Activated CD4-positive, alpha-beta T cell treated with anti-CD3 and anti-CD28 coated beads, Interleukin-2, amount 10 ng/mL, durations not matched to agents 24 days and 14 days (primary cell): ENCODE measurements at regions of chr2 and their contacts with region 1.

Region 1: DNA sequence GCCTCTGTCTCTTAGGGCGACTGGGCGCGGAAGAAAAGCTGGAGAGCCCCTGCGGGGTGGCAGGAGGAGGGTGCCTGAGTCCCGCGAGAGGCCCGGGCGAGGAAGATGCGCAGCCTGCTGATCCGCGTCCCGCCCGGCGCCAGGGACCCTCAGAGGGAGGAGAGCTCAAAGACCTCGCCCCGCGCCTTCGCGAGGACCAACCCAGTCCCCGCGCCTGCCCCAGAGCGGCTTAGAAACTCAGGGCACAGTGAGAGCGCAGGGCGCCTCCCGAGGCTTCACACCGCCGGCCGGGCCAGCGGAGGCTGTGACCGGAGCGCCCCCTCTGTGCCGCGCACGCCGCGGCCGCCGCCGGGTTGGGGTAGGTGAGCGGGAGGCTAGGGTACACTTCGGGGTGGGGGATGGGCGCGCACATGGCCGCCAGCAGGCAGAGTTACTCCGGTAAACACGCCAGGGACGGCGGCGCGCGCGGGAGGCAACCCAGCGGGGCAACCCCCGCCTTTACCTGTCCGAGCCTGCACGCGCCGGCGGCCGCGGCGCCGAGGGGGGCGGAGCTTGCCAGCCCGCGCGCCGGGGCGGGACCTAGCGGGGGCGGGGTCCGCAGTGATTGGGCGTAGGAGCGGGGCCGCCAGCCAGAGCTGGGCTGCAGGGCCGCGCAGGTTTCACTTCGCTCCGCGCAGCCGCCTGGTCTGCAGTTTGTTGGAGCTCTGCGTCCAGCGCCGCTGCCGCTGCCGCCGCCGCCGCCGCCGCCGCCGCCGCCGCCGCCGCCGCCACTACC is at the start of gene BCL2L11:
- DNase-seq: peak; percentile 98
- H3K4me3 Mint-ChIP-seq: peak within 1 kb of the TSS; percentile 96
- H3K27ac Mint-ChIP-seq: peak within 1 kb of the TSS; percentile 93
- H3K4me1 Mint-ChIP-seq: peaks cover 44% of the 10 kb centered on the region
- H3K27me3 Mint-ChIP-seq: peaks cover 20% of the 10 kb centered on the region
- total RNA-seq, gene BCL2L11: 193 and 219 TPM in 2 replicates

Region 2: DNA sequence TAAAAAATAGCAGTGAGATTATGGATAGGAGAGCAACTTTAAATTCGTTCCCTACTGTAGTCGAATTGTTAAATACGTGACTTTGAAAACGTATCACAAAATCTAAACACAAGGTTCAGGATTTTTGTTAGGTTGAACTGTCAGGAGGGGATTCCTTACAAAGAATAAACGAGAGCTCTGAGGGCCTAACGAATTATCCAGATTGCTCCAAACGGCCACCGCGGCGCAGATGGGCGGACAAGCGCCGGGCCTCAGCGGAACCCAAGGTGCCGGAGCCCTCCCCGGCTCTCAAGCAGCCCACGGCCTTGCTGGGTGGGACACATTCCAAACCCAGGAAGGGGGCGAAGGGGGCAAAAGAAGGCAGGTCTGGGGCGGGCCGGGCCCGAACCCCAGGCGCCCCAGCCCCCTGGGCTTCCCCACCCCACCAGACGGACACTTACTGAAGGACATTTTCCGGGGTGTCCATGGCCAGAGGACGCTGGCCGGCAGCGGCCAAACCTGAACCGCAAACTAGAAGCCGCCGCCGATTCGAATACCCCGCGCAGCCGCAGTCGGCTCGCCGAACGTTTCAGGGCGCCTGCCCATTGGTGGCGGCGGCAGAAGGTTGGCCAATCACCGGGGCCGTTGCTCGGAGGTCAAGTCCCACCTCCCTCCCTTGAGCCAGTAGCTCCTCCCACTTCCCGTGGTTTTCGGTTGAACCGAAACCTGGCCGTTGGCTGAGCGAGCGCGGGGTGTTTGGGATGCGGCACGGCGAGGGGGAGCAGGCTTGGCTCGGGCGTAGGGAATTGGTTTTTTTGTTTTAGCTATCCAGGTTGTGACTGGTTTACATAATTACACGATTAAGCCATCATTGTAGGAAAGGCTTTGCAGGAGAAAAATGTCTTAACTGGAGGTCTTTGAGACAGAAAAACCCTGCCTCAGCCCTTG is 442.6 kb before region 1 on chr2 and contains the start of gene BUB1:
- intact Hi-C with region 1: loop called (anchors 10 kb)
- DNase-seq: peak; percentile 99
- H3K4me3 Mint-ChIP-seq: peak within 1 kb of the TSS; percentile 98
- H3K27ac Mint-ChIP-seq: peak within 1 kb of the TSS; percentile 99
- H3K4me1 Mint-ChIP-seq: peaks cover 33% of the 10 kb centered on the region
- H3K27me3 Mint-ChIP-seq: peaks cover 9% of the 10 kb centered on the region
- total RNA-seq, gene BUB1: 58.4 and 61.7 TPM in 2 replicates

Region 3: DNA sequence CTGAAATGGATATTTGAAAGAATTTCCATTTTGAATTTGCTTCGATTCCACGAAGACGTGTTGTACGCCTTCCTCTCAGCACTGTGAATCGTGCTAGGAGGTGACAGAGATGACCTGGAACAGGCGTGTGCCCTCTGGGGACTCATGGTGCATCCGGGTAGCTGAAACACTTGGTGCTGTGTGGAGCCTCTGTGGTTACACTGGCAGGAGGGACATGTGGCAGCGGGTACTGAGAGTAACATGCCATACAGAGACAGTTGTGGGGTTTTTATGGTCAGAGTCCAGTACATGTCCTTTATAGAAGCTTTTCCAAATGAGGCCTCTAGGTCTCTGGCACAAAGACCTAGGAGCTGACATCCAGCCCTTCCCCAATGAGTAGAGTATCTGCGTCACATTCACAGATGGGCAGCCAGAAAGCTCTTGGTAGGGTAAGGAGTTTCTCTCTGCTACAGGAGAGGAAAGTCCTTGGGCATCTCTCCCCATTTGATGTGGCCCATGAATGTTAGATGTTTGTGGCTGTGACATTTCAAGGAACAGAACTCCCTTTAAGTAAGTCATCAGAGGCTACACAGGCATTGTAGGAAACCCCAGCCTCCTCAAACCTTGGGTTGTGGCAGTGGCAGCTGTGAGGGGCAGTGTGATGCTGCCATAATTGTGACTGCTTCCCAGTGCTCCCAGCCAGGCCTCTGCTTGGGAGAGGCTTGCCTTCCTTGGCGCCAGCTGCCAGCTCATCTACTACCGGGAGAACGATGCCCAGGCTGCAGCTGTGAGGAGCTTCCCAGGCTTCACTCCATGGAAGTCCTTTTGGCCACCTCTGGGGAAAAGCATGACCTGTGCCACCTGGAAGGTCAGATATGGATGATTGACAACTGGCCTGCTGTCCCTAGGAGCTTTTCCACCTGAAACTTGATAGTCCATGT is 307.5 kb before region 1 on chr2:
- intact Hi-C with region 1: loop called (anchors 2 kb)
- DNase-seq: peak; percentile 53
- H3K4me3 Mint-ChIP-seq: no peak overlapping the region
- H3K27ac Mint-ChIP-seq: no peak overlapping the region
- H3K4me1 Mint-ChIP-seq: peaks cover 19% of the 10 kb centered on the region
- H3K27me3 Mint-ChIP-seq: peaks cover 31% of the 10 kb centered on the region

Region 4: DNA sequence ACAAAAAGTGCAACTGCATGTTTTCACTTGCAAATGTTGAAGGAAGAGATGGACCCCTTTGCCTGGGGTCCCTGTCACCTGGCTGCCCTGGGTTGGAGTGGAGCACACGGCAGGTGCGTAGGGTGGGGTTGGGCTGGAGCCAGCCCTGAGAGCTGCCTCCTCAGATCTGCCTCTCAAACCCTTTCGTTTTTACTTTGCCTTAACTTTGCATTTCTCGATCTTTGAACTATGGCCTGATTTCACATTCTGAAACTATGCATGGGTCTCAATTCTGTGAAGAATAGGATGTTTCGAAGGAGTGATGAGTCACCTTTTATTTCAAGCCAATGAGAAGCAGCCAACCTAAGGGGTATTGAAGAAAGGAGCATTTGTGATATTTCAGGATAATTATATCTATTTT is 255.3 kb before region 1 on chr2:
- intact Hi-C with region 1: loop called (anchors 1 kb)
- DNase-seq: peak; percentile 82
- H3K4me3 Mint-ChIP-seq: peak overlapping the region; percentile 47
- H3K27ac Mint-ChIP-seq: peak overlapping the region; percentile 43
- H3K4me1 Mint-ChIP-seq: peaks cover 66% of the 10 kb centered on the region
- H3K27me3 Mint-ChIP-seq: peaks cover 32% of the 10 kb centered on the region

Region 5: GRCh38 chr2:111091811-111092211 is 28.6 kb before region 1 on chr2:
- intact Hi-C with region 1: loop called (anchors 1 kb)
- DNase-seq: peak; percentile 53
- H3K4me3 Mint-ChIP-seq: no peak overlapping the region
- H3K27ac Mint-ChIP-seq: peak overlapping the region; percentile 6
- H3K4me1 Mint-ChIP-seq: peaks cover 13% of the 10 kb centered on the region
- H3K27me3 Mint-ChIP-seq: peaks cover 62% of the 10 kb centered on the region

Region 6: GRCh38 chr2:111157798-111158197 is 37.4 kb after region 1 on chr2:
- intact Hi-C with region 1: no loop called
- DNase-seq: no peak
- H3K4me3 Mint-ChIP-seq: no peak overlapping the region
- H3K27ac Mint-ChIP-seq: no peak overlapping the region
- H3K4me1 Mint-ChIP-seq: peaks cover 48% of the 10 kb centered on the region
- H3K27me3 Mint-ChIP-seq: no peaks in the 10 kb centered on the region

Region 7: GRCh38 chr2:111209045-111209514 is 88.6 kb after region 1 on chr2:
- intact Hi-C with region 1: loop called (anchors 2 kb)
- DNase-seq: peak; percentile 84
- H3K4me3 Mint-ChIP-seq: peak overlapping the region; percentile 19
- H3K27ac Mint-ChIP-seq: peak overlapping the region; percentile 76
- H3K4me1 Mint-ChIP-seq: peaks cover 35% of the 10 kb centered on the region
- H3K27me3 Mint-ChIP-seq: peaks cover 3% of the 10 kb centered on the region

Region 8: DNA sequence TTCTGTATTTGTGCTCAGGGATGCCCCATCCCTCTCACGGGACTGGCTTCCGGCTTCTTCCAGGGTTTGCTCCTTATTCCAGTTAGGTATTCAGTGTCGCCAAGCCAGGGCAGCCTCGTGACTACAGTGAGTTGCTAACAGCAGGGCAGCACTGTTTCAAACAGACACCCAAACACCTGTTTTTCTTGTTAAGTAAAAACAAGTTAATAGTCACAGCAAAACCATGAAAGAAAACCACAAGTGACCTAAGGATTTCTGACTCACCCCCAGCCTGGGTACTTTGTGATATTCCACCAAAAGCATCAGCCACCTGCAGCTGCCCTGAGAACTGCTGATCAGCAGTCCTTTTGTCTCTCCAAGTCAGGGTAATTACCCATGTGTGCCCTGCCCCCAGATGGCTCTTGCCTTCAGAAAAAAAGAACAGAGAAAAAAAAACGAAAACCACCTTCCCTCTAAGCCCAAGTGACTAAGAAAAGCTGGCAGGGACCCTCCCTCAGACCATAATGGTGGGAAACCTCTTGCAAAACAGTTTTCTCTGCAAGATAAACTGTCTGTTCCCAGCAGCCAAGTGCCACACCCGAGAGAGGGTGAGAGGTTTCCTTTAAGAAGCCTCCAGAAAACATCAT is 585.4 kb after region 1 on chr2:
- intact Hi-C with region 1: loop called (anchors 1 kb)
- DNase-seq: peak; percentile 87
- H3K4me3 Mint-ChIP-seq: peak overlapping the region; percentile 61
- H3K27ac Mint-ChIP-seq: peak overlapping the region; percentile 91
- H3K4me1 Mint-ChIP-seq: peaks cover 61% of the 10 kb centered on the region
- H3K27me3 Mint-ChIP-seq: no peaks in the 10 kb centered on the region